ENCODE measurements at regions of chr5 and their contacts with region 1.

Region 1: DNA sequence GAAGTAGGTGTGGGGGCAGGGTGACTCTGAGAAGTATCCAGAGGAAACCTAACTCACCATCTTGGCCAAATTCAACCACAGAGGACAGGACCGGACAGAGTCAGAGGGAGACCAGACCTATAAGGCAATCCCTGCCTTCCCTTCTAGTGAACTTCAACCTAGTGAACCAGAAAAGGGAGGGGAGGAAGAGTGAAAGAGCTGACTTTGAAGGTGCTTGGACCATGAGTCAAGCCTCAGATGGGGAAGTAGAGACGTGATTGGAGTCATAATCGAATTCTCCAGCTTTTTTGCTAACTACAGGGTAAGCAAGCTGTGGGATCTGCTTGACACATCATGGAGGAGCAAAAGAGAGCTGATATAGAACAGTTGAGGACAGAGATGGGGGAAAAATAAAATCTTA is 18.8 kb upstream of the KIF2A start:
- DNase-seq: no peak
- H3K4me3 ChIP-seq: no peak overlapping the region
- H3K4me3 Mint-ChIP-seq: peak overlapping the region in 7 of 8 donors; percentile 37 to 72 (median 63)
- H3K27ac ChIP-seq: no peak overlapping the region
- H3K27ac Mint-ChIP-seq: peak overlapping the region in 6 of 7 donors; percentile 24 to 89 (median 56)
- H3K4me1 ChIP-seq: peaks cover 52% of the 10 kb centered on the region
- H3K4me1 Mint-ChIP-seq: peaks cover 34 to 69% (median 51%) of the 10 kb centered on the region in 4 donors
- H3K27me3 ChIP-seq: no peaks in the 10 kb centered on the region
- H3K27me3 Mint-ChIP-seq: no peaks in the 10 kb centered on the region

Region 2: GRCh38 chr5:62315376-62316175 is 28.3 kb after region 1 on chr5:
- CTCF ChIA-PET with region 1: interaction called, 12 read pairs
- POLR2A ChIA-PET with region 1: interaction called, 3 read pairs
- intact Hi-C with region 1: no loop called
- DNase-seq: no peak
- H3K4me3 ChIP-seq: no peak overlapping the region
- H3K4me3 Mint-ChIP-seq: peak overlapping the region; percentile 2 to 62 (median 16)
- H3K27ac ChIP-seq: no peak overlapping the region
- H3K27ac Mint-ChIP-seq: peak overlapping the region; percentile 7 to 92 (median 31)
- H3K4me1 ChIP-seq: peaks cover 98% of the 10 kb centered on the region
- H3K4me1 Mint-ChIP-seq: peaks cover 65 to 94% (median 81%) of the 10 kb centered on the region in 4 donors
- H3K27me3 ChIP-seq: no peaks in the 10 kb centered on the region
- H3K27me3 Mint-ChIP-seq: no peaks in the 10 kb centered on the region

Region 3: GRCh38 chr5:62331921-62332320 is 44.7 kb after region 1 on chr5:
- CTCF ChIA-PET with region 1: interaction called, 23 read pairs
- POLR2A ChIA-PET with region 1: interaction called, 3 read pairs
- intact Hi-C with region 1: no loop called
- DNase-seq: no peak
- H3K4me3 ChIP-seq: no peak overlapping the region
- H3K4me3 Mint-ChIP-seq: no peak overlapping the region
- H3K27ac ChIP-seq: no peak overlapping the region
- H3K27ac Mint-ChIP-seq: peak overlapping the region in 2 of 7 donors; percentile 3 to 44
- H3K4me1 ChIP-seq: peaks cover 77% of the 10 kb centered on the region
- H3K4me1 Mint-ChIP-seq: peaks cover 54 to 91% (median 71%) of the 10 kb centered on the region in 4 donors
- H3K27me3 ChIP-seq: no peaks in the 10 kb centered on the region
- H3K27me3 Mint-ChIP-seq: no peaks in the 10 kb centered on the region

Region 4: GRCh38 chr5:62340392-62340791 is 53.2 kb after region 1 on chr5:
- CTCF ChIA-PET with region 1: interaction called, 23 read pairs
- POLR2A ChIA-PET with region 1: interaction called, 5 read pairs
- intact Hi-C with region 1: loop called (anchors 1 kb)
- DNase-seq: peak in 4 of 5 donors; percentile 18 to 39 (median 30)
- H3K4me3 ChIP-seq: no peak overlapping the region
- H3K4me3 Mint-ChIP-seq: peak overlapping the region in 1 of 8 donors; percentile 1
- H3K27ac ChIP-seq: no peak overlapping the region
- H3K27ac Mint-ChIP-seq: peak overlapping the region in 6 of 7 donors; percentile 7 to 44 (median 24)
- H3K4me1 ChIP-seq: peaks cover 47% of the 10 kb centered on the region
- H3K4me1 Mint-ChIP-seq: peaks cover 43 to 79% (median 59%) of the 10 kb centered on the region in 4 donors
- H3K27me3 ChIP-seq: no peaks in the 10 kb centered on the region
- H3K27me3 Mint-ChIP-seq: no peaks in the 10 kb centered on the region

Measured in CD4-positive, alpha-beta memory T cell (primary cell).